ENCODE measurements at regions of chr22 and their contacts with region 1.

Region 1: GRCh38 chr22:32796865-32797573 is 4.5 kb upstream of the TIMP3 start:
- DNase-seq: peak; percentile 63
- H3K4me3 ChIP-seq: 0 out of 2 replicates have a peak overlapping the region, but pooled peaks have one; percentile 18
- H3K27ac ChIP-seq: peak overlapping the region; percentile 13
- H3K27me3 ChIP-seq: no peaks in the 10 kb centered on the region
- CTCF ChIP-seq: peak; percentile 93

Region 2: GRCh38 chr22:32522237-32522636 is 274.8 kb before region 1 on chr22:
- CTCF ChIA-PET with region 1: interaction called, 330 read pairs
- POLR2A ChIA-PET with region 1: no interaction called
- DNase-seq: no peak
- H3K4me3 ChIP-seq: no peak overlapping the region
- H3K27ac ChIP-seq: no peak overlapping the region
- H3K27me3 ChIP-seq: peaks cover 12% of the 10 kb centered on the region
- CTCF ChIP-seq: no peak

Region 3: DNA sequence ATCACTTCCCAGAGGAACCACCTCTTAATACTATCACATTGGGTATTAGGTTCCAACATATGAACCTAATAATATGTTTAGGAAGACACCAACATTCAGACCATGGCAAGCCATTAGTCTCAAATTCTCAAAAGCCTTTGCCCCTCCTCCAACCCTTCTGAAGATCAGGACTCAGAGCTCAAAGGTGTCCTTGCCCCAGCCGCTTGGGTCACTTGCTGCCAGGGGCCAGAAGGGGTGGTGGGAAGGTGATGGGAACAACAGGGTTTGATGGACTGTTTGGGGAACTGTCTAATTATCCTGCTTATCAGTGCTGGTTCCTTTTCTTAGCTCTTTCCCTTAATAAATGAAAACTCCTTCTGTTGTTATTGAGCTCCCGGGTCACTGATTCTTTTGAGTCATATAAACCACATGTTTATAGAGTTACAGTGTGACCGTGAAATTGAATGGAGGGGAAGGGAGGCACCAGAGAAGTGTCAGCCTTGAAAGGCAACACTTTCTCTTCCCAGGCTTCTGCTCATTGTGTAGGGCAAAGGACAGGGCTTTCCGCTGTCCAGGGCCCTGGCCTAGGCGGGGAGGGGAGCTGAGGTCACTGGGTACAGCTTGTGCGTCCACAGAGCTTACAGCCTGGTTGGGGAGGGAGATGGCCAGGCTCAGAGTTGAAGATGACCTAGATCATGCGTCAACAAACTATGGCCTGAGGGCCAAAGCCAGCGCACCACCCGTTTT is 217.3 kb before region 1 on chr22:
- CTCF ChIA-PET with region 1: interaction called, 33 read pairs
- POLR2A ChIA-PET with region 1: interaction called, 4 read pairs
- DNase-seq: no peak
- H3K4me3 ChIP-seq: no peak overlapping the region
- H3K27ac ChIP-seq: no peak overlapping the region
- H3K27me3 ChIP-seq: peaks cover 4% of the 10 kb centered on the region
- CTCF ChIP-seq: no peak

Region 4: DNA sequence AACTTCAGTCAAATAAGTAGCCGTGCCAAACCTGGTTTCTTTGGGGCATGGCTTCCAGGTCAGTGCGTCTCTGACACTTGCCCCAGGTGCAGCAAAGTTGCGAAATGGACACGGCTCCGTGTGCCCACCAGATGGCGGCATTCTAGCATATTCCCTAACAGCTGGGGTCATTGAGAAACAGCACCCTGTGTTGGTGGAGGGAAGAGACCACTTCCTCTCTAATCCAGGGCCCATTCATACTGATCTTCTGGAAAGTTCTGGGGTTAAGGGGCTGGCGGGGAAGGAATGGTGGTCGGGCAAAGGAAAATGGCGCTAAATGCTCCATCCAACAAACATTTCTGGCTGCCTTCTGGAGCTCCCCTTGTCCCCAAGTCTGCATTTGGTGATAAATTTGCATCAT is 136.7 kb before region 1 on chr22:
- CTCF ChIA-PET with region 1: interaction called, 109 read pairs
- POLR2A ChIA-PET with region 1: interaction called, 17 read pairs
- DNase-seq: no peak
- H3K4me3 ChIP-seq: no peak overlapping the region
- H3K27ac ChIP-seq: peak overlapping the region; percentile 96
- H3K27me3 ChIP-seq: no peaks in the 10 kb centered on the region
- CTCF ChIP-seq: peak; percentile 68

Region 5: DNA sequence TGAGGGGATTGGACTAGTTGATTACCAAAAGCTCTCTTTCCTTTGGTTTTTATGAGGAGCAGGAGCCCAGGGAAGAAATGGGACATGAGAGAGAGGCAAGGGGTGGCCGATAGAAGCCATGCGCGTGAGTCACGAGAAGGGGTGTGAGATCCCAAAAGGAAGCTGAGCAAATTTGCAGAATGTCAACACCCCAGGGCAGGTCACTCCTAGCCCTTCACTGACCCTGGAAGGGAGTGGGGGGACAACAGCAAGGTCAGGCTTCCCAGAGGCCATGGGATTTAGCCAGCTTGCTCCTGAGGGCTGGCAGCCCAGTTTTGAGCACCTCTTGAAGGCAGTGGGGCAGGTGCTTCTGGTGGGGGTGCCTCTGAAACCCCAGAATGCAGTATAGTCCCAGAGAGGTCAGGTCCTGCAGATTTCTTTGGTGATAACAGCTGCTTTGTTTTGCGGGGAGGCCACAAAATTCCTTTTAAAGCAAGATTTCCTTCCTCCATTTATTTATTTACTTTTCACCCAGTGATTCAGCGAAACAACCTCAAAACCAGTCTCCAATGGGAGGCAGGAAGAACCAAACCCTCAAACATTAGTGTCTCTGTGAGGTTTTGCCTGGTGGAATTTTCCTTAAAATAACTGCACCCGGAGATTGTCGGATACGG is 35.6 kb before region 1 on chr22:
- CTCF ChIA-PET with region 1: interaction called, 10 read pairs
- POLR2A ChIA-PET with region 1: interaction called, 5 read pairs
- DNase-seq: peak; percentile 46
- H3K4me3 ChIP-seq: no peak overlapping the region
- H3K27ac ChIP-seq: peak overlapping the region; percentile 70
- H3K27me3 ChIP-seq: no peaks in the 10 kb centered on the region
- CTCF ChIP-seq: no peak

Region 6: DNA sequence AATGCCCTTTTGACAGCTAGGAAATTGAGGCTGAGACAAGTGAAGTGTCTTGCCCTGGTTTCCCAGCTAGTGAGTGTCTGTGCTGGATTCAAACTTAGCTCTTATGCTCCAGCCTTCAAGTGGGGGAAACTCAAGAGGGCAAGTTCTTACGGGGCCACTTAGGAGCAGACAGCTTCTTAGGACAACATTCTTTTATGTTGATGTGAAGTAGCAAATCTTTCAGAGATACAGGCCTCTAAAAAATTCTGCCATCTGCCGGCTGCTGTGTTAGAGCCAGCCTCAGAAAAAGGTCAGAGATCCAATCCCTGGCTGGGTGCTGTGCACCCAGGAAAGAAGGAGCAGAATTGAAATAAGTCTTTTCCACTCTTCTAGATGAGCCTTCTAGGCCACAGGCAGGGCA is 31.1 kb after region 1 on chr22:
- CTCF ChIA-PET with region 1: interaction called, 10 read pairs
- POLR2A ChIA-PET with region 1: interaction called, 3 read pairs
- DNase-seq: no peak
- H3K4me3 ChIP-seq: no peak overlapping the region
- H3K27ac ChIP-seq: peak overlapping the region; percentile 39
- H3K27me3 ChIP-seq: no peaks in the 10 kb centered on the region
- CTCF ChIP-seq: no peak; the same call in 1 of the 2 replicates

Region 7: GRCh38 chr22:32967386-32968101 is 170.5 kb after region 1 on chr22:
- CTCF ChIA-PET with region 1: no interaction called
- POLR2A ChIA-PET with region 1: no interaction called
- DNase-seq: no peak
- H3K4me3 ChIP-seq: no peak overlapping the region
- H3K27ac ChIP-seq: no peak overlapping the region
- H3K27me3 ChIP-seq: peaks cover 10% of the 10 kb centered on the region
- CTCF ChIP-seq: no peak

Region 8: GRCh38 chr22:33296941-33297340 is 499.9 kb after region 1 on chr22:
- CTCF ChIA-PET with region 1: no interaction called
- POLR2A ChIA-PET with region 1: no interaction called
- DNase-seq: no peak
- H3K4me3 ChIP-seq: no peak overlapping the region
- H3K27ac ChIP-seq: no peak overlapping the region
- H3K27me3 ChIP-seq: no peaks in the 10 kb centered on the region
- CTCF ChIP-seq: no peak